ENCODE measurements at regions of chr6 and their contacts with region 1.

Region 1: DNA sequence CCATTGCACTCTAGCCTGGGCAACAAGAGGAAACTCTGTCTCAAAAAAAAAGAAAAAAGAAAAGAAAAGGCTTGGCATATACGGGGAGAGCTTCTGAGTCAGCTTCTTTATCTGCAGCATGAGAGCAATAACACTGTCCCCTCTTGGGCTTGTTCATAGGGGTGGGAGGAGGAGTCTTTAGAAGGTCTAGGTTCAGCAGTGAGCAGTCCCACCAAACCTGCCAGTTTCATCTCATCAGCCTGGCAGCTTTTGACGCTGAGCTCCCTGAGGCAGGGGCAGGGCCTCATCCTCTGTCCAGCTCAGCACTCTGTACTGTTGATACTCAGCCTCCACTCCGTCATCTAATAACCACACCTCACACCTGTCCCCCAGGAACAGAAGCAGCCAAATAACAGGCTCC is 5.6 kb upstream of the C6orf132 start:
- DNase-seq: peak; percentile 27
- ATAC-seq: no peak
- H3K4me3 ChIP-seq: no peak overlapping the region
- H3K27ac ChIP-seq: no peak overlapping the region
- H3K4me1 ChIP-seq: peaks cover 15% of the 10 kb centered on the region
- H3K27me3 ChIP-seq: no peaks in the 10 kb centered on the region
- CTCF ChIP-seq: no peak

Region 2: DNA sequence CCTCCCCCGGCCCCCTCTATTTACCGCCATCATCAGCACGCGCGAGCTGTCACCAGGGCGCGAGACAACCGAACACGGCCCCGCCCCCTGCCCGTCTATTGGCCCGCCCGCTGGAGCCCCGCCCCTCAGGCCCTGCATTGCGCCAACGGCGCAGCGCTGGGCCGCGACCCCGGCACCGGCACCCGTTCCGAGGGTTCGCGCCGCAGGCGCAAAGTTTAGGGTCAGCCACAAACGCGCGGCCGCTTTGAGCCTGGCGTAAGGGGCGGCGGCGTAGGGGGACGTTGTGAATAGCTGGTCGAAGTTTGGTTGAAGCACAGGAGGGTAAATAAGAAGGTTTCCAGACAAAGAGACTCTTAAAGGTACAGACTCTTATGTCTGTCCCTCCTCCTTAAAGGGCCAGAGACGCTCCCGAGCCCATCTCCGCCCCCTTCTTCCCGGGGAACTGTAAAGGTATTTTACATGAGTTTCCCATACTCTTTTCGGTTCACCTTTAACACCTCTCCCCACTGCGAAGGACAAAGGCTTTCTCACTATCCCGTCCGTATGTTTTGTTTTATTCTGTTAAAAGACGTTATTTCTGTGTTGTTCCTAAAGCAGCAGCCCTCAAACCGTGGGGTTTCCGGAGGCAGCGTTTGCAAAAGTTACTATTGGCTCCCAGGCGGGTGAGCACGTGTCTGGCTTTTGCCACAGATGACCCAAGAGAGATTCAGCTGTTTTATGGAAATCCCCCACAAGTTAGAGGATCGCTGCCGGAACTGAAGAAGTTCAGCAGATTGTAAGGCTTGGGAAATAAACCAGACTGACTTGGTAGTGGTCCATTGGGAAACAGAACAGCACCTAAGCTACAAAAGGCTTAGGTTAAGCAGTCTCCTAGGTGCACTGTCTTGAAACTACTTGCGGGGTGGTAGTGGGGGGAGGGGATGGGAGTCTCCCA is 252.5 kb before region 1 on chr6 and contains the start of gene USP49:
- CTCF ChIA-PET with region 1: no interaction called
- POLR2A ChIA-PET with region 1: no interaction called
- intact Hi-C with region 1: no loop called
- DNase-seq: peak; percentile 82
- ATAC-seq: peak; percentile 92
- H3K4me3 ChIP-seq: peak within 1 kb of the TSS; percentile 85
- H3K27ac ChIP-seq: peak within 1 kb of the TSS; percentile 67
- H3K4me1 ChIP-seq: peaks cover 16% of the 10 kb centered on the region
- H3K27me3 ChIP-seq: no peaks in the 10 kb centered on the region
- CTCF ChIP-seq: no peak
- total RNA-seq, gene USP49: 2.3 and 5.7 TPM in 2 replicates

Region 3: DNA sequence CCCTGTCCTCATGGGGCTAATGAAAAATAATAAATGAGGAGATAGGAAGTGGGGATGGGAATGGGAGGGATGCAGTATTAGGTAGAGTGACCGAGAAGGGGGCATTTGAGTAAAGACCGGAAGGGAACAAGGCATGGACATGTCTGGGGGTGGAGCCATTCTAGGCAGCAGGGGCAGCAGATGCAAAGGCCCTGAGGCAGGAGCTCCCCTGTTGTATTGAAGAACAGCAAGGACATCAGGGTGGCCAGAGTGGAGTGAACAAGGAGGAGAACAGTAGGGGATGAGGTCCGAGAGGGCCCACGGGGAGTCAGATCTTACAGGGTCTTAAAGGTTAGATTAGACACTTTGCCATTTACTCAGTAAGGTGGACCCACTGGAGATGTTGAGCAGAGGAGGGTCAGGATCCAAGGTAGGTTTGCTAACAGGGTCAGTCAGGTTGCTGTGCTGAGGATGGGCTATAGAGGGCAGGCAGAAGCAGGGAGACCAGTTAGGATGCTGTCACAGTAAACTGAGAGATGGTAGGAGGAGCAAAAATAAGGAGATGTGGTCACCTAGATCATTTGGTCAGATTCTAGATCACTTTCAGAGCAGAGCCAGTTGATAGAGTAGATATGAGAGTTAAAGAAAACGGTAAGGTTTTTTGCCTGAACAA is 79.1 kb before region 1 on chr6:
- CTCF ChIA-PET with region 1: no interaction called
- POLR2A ChIA-PET with region 1: no interaction called
- intact Hi-C with region 1: no loop called
- DNase-seq: no peak
- ATAC-seq: peak; percentile 43
- H3K4me3 ChIP-seq: no peak overlapping the region
- H3K27ac ChIP-seq: no peak overlapping the region
- H3K4me1 ChIP-seq: no peaks in the 10 kb centered on the region
- H3K27me3 ChIP-seq: no peaks in the 10 kb centered on the region
- CTCF ChIP-seq: peak; percentile 31

Region 4: DNA sequence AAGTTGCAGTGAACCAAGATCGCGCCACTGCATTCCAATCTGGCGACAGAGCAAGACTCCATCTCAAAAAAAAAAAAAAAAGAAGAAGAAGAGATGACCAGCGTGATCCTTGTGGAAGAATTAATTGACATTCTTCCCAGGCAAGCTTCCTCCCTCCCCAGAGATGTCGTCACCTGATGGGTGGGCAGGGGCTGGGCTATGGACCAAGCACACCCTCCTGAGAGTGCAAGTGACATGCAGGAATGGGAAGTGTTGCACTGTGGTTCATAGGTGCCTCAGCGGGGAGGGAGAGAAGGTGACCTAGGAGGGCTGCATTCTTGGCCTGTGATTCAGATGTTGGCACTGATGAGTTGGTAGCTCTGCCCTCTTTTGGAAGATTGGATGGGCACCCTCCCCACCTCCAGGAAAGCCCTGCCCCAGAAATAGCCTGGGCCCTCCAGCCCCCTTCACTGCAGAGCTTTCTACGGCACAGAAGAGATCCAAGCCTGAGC is 59.9 kb before region 1 on chr6:
- CTCF ChIA-PET with region 1: no interaction called
- POLR2A ChIA-PET with region 1: interaction called, 11 read pairs
- intact Hi-C with region 1: no loop called
- DNase-seq: peak; percentile 90
- ATAC-seq: peak; percentile 89
- H3K4me3 ChIP-seq: no peak overlapping the region
- H3K27ac ChIP-seq: peak overlapping the region; percentile 8; the same call in 1 of the 2 replicates
- H3K4me1 ChIP-seq: peaks cover 18% of the 10 kb centered on the region
- H3K27me3 ChIP-seq: no peaks in the 10 kb centered on the region
- CTCF ChIP-seq: no peak

Region 5: DNA sequence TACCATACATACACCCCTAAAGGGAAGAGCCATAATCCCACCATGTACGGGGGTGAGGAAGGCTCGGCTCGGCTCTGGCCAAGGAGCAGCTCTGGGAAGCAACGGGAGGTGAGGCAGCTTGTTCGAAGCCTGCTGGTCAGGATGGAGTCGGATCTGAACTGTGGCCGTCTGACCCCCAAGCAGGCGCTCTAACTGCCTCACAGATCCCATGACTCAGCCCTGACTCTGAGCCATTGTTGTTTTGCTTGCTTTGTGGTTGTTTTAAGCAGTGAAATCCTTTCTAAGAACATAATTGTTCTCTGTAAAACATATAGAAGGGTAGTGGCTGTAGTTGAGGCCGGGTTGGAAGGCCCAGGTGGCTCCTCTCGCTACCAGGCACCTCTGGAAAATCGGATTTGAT is 16.5 kb before region 1 on chr6:
- CTCF ChIA-PET with region 1: no interaction called
- POLR2A ChIA-PET with region 1: no interaction called
- intact Hi-C with region 1: no loop called
- DNase-seq: peak; percentile 90
- ATAC-seq: peak; percentile 99
- H3K4me3 ChIP-seq: no peak overlapping the region
- H3K27ac ChIP-seq: peak overlapping the region; percentile 80
- H3K4me1 ChIP-seq: peaks cover 16% of the 10 kb centered on the region
- H3K27me3 ChIP-seq: no peaks in the 10 kb centered on the region
- CTCF ChIP-seq: no peak

Region 6: DNA sequence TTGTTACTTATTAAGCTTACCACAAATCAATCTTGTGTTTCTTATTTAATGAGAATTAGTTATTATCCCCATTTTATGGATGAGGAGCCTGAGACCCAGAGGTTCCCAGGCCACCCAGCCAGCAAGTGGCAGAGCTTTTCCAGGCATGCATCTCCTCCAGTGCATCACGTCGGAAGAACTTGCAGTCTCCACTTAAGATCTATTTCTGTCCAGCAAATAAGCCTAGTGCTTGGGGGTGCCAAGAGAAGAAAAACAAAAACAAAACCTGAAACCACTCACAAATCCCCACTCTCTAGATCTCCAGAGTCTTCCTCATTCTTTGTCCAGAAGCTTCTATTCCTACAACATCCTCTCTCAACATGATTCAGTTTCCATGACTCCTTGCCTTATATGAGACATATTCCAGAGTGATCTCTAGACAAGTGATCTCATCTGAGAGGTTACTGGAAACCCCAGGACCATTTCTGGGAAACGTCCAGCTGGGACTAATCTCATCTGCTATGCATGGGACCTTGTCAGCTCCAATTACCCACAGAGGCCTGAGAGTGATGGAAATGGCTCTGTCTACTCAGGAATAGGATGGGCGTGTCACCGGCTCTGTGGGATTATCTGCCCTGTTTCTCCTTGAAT is 42.6 kb after region 1 on chr6:
- CTCF ChIA-PET with region 1: no interaction called
- POLR2A ChIA-PET with region 1: no interaction called
- intact Hi-C with region 1: no loop called
- DNase-seq: no peak
- ATAC-seq: no peak
- H3K4me3 ChIP-seq: no peak overlapping the region
- H3K27ac ChIP-seq: no peak overlapping the region
- H3K4me1 ChIP-seq: peaks cover 17% of the 10 kb centered on the region
- H3K27me3 ChIP-seq: no peaks in the 10 kb centered on the region
- CTCF ChIP-seq: no peak